ENCODE measurements at regions of chr20 and their contacts with region 1.

Region 1: GRCh38 chr20:210809-211502 is 16.1 kb upstream of the DEFB129 start:
- DNase-seq: no peak
- ATAC-seq: no peak
- H3K4me3 ChIP-seq: no peak overlapping the region
- H3K27ac ChIP-seq: no peak overlapping the region
- H3K4me1 ChIP-seq: no peaks in the 10 kb centered on the region
- H3K27me3 ChIP-seq: no peaks in the 10 kb centered on the region
- CTCF ChIP-seq: no peak

Region 2: GRCh38 chr20:152131-152530 is 58.8 kb before region 1 on chr20:
- intact Hi-C with region 1: no loop called
- DNase-seq: no peak
- ATAC-seq: no peak
- H3K4me3 ChIP-seq: no peak overlapping the region
- H3K27ac ChIP-seq: no peak overlapping the region
- H3K4me1 ChIP-seq: no peaks in the 10 kb centered on the region
- H3K27me3 ChIP-seq: peaks cover 0 to 2% (median 0%) of the 10 kb centered on the region in 4 donors
- CTCF ChIP-seq: no peak

Region 3: DNA sequence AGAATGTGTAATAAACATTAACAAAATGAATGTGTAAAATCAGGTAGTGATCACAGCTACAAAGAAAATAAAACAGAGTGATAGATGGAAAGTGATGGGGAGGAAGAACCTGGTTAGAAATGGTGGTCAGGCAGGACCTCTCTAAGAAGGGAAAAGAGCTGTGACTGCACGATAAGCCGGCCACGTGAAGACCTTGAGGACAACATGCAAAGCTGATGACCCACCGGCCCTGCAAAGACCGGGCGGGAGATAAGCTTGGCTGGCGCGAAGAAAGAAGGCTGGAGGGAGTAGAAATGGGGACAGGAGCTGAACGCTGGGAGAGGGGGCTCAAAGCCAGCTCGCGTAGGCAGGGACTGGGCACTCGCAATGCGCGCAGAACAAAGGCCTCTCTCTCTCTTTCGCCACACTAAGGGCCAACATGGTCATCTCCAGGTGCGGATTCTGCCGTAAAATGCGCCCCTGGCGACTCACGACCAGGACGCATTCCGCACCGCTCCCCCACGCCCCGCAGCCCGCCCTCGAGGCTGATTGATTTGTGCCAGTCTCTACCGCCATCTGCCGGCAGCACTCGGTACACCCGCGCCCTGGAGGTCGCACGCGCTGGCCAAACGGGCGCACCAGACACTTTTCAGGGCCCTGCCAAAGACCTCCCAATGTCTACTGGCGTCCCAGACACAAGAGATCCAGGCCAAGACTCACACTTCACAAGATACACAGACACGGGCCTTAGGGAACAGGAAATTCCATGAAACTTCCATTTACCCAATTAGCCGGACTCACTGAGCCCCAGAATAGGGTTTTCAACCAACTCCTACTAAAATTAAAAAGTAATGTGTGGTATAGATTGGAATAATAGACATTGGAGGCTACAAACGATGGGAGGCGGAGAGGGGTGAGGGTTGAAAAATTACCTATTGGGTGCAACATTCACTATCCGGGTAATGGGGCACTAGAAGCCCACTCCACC is 55.9 kb after region 1 on chr20:
- intact Hi-C with region 1: no loop called
- DNase-seq: peak; percentile 74 to 95 (median 90)
- ATAC-seq: peak; percentile 93 to 100 (median 98)
- H3K4me3 ChIP-seq: peak overlapping the region; percentile 21 to 52 (median 34)
- H3K27ac ChIP-seq: no peak overlapping the region
- H3K4me1 ChIP-seq: peaks cover 0 to 3% (median 0%) of the 10 kb centered on the region in 3 donors
- H3K27me3 ChIP-seq: no peaks in the 10 kb centered on the region
- CTCF ChIP-seq: peak; percentile 94 to 98 (median 96)

Region 4: DNA sequence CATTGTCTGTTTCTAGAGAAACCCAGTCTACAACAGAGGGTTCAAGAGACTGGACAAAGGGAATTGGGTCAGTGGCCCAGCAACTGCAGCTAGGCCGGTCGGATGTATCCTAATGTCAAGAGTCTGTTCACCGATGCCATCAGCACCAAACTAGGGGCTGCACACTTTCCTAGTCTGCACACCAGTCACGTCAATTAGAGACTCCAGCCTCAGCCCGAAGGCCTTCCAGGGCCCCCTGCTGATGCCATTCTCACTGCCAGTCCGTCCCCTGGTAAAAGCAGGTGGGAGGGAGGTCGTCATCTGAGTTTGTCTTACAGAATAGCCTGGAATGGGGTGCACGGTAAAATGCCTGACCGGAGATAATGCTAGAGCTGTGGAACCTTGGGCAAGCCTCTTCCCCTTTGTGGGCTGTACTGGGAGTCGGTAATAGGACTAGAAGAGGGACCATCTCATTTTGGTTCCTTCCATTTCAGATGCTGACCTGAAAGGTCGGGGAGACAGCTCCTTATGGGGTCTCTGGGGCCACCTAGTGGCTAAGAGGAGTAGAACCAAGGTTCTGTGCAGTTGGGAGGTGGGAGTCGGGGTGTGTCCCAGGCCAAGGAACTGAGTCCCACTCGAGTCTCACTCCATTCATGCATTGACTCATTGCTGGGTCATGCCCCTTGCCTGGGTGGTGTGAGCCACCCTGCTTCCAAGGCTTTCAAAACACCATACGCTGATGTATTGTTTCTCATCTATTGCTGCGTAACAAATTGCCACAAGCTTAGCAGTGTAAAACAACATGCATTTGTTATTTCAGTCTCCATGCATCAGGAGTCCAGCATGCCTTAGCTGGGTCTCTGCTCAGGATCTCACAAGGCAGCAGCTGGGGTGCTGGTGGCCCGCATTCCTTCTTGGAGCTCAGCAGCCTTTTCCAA is 119.5 kb after region 1 on chr20:
- intact Hi-C with region 1: loop called in 1 of 3 experiments (anchors 5 kb)
- DNase-seq: peak in 3 of 6 donors; percentile 34 to 54 (median 52)
- ATAC-seq: peak in 3 of 4 donors; percentile 22 to 36 (median 32)
- H3K4me3 ChIP-seq: no peak overlapping the region
- H3K27ac ChIP-seq: no peak overlapping the region
- H3K4me1 ChIP-seq: peaks cover 0 to 6% (median 0%) of the 10 kb centered on the region in 3 donors
- H3K27me3 ChIP-seq: no peaks in the 10 kb centered on the region
- CTCF ChIP-seq: peak; percentile 49 to 77 (median 64)

Measured in pancreas (tissue), 10 donors.